Activated CD8-positive, alpha-beta T cell treated with anti-CD3 and anti-CD28 coated beads for 36 hours (primary cell): ENCODE measurements at regions of chr7 and their contacts with region 1.

Region 1: GRCh38 chr7:18666107-18666728 is 170.7 kb downstream of the HDAC9 start:
- DNase-seq: peak; percentile 83
- ATAC-seq: peak; percentile 78
- H3K4me3 Mint-ChIP-seq: no peak overlapping the region
- H3K27ac Mint-ChIP-seq: no peak overlapping the region
- H3K4me1 Mint-ChIP-seq: no peaks in the 10 kb centered on the region
- H3K27me3 Mint-ChIP-seq: no peaks in the 10 kb centered on the region
- CTCF ChIP-seq: peak; percentile 90

Region 2: DNA sequence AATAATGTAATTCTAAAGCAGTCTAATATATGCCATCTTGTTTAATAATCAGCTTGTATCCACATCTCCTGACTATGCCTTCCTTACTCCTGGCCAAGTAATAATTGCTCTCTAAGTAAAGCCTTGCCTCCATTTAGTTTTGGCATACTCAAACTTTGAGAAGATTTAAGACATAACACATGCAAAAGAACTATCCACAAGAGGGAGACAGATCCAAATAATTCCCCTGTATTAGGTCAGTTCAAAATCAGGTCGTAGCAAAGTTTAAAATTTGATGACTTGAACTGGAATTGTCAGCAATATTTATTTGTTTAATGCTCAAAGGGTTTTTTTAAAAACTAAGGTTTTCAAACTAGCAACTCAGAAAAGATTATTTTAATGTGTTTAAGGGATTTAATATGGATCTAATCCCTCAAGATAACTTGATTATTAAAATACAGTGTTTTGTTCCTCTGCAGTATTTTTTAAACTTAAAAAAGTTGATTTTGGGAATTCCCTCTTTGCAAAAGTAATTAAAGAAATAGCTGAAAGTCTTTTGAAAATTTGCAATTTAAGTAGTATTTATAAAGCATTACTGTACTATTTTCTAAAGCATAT is 75.4 kb before region 1 on chr7:
- CTCF ChIA-PET with region 1: interaction called, 13 read pairs
- POLR2A ChIA-PET with region 1: no interaction called
- intact Hi-C with region 1: no loop called
- DNase-seq: no peak
- ATAC-seq: no peak
- H3K4me3 Mint-ChIP-seq: no peak overlapping the region
- H3K27ac Mint-ChIP-seq: no peak overlapping the region
- H3K4me1 Mint-ChIP-seq: no peaks in the 10 kb centered on the region
- H3K27me3 Mint-ChIP-seq: no peaks in the 10 kb centered on the region
- CTCF ChIP-seq: peak; percentile 39

Region 3: DNA sequence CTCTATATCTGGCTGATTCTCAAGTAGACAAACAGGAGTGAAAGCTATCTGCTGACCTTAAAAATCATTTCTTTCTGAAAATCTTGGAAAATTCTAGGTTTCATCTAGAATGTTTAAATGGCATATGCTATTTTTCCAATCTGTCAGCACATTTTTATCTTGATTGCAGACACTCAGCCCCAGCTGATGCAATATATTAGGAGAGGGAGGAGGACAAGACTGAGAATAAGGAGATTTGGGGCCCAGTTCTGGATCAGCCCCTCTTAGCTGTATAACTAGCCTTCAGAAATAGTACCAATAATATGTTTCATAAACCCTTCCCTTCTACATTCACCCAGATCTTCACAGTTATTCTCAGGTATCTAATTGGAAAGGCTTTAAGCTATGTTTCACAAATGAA is 39.5 kb before region 1 on chr7:
- CTCF ChIA-PET with region 1: no interaction called
- POLR2A ChIA-PET with region 1: no interaction called
- intact Hi-C with region 1: no loop called
- DNase-seq: no peak
- ATAC-seq: no peak
- H3K4me3 Mint-ChIP-seq: no peak overlapping the region
- H3K27ac Mint-ChIP-seq: no peak overlapping the region
- H3K4me1 Mint-ChIP-seq: no peaks in the 10 kb centered on the region
- H3K27me3 Mint-ChIP-seq: no peaks in the 10 kb centered on the region
- CTCF ChIP-seq: no peak

Region 4: GRCh38 chr7:18655912-18656311 is 10.3 kb before region 1 on chr7:
- CTCF ChIA-PET with region 1: interaction called, 12 read pairs
- POLR2A ChIA-PET with region 1: no interaction called
- intact Hi-C with region 1: no loop called
- DNase-seq: no peak
- ATAC-seq: no peak
- H3K4me3 Mint-ChIP-seq: no peak overlapping the region
- H3K27ac Mint-ChIP-seq: no peak overlapping the region
- H3K4me1 Mint-ChIP-seq: no peaks in the 10 kb centered on the region
- H3K27me3 Mint-ChIP-seq: no peaks in the 10 kb centered on the region
- CTCF ChIP-seq: no peak